ENCODE measurements at regions of chr7 and their contacts with region 1.

Region 1: DNA sequence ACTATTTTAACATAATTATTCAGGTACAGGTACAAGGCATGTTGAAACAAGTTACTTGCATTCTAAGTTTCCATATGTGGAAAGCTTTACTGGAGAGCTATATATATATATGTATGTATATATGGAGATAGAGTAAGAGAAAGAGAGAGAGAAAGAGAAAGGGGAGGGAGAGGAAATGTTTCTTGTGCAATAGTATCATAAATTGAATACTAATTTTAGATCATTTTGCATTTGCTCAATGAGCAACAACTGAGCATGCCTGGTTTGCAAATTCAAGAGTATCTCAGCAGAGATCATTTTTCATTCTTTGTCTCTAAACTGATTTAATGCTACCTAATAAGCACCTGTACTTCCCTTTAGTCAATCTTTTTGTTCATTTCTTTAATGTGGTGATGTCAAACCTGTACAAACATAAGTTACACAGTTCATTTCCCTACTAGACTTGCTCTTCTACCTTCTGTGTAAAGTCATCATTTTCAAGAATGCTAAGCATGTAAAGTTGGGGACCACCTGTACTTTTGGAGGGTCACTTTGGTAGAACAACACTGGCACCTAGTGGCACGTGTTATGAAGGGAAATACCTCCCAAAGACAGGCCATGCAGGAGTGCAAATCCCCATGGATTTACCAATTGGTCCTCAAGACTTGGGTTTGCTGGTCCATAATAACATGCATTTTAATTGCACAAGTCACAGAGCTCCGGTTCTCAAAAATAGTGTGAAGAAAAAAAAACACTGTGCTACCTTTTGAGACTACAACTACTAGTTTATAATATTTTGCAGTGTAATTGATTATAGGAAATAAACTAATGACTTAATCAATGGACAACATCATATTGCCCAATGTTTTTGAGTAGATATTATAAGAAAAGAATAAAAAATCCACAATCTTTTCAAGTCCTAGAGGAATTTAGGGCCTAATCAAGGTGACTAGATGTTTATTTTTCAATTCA is 431.2 kb upstream of the IGFBP3 start:
- DNase-seq: peak in 3 of 10 donors; percentile 24 to 52 (median 31)

Region 2: DNA sequence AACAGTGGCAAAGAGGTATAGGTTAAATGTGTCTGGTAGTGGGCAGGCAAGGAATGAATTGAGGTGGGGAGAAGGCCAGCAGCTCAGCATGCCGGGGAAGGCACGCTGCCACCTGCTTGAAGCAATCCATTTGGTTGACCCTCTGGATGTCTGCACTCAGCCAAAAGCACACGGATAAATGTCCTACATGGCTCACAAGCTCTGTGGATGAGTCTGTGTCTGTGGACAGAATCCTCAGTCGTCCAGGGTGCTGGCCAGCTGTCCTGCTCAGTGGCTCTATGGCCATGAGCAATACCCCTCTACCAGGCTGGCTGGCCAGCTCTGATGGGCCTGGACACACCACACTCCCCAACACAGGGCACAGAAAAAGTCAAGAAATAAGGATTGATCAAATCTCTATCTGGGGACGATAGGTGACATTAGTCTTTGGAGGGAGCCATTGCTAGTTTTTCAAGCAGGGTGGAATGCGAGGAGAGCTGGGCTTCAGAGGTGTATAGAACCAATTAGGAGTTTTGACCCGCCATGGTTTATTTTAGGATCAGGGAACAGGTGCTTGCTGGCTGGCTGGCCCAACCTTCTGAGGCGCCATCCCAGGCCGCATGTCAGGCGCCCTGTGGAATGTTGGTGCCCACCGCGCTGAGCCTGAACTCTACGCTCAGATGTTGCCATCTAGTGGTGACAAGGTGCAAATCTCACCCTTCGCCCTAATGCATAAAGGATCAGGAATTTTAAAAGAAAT is 736.2 kb after region 1 on chr7:
- intact Hi-C with region 1: loop called (anchors 5 kb)
- DNase-seq: peak in 9 of 10 donors; percentile 27 to 92 (median 52)

Measured in posterior cingulate gyrus (tissue), 11 donors.